ENCODE measurements at regions of chr5 and their contacts with region 1.

Region 1: DNA sequence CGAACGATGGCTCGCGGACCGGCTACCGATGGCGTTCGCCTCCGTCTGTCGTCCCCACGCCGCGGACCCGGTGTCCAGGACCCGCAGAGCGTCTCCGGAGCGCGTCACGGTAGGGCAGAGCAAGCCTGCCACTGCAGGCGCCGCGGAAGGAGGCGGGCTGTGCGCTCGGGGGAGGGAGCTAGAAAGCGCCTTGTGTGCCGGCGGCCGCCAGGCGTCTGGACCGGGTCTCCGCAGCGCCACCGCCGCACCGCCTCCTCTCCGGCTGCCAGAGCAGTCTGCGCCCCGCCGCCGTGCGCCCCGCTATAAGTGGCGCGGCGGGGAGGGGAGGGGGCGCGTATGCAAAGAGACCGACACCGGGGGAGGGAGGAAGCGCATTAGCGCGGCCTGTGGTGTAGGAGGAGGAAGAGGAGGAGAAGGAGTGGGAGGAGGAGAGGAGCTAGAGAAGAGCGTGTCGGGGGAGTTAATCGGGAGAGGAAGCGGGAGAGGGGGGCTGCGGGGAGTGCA is at the start of gene ENC1:
- DNase-seq: peak; percentile 89 to 96 (median 90)
- ATAC-seq: peak; percentile 76 to 94 (median 86)
- H3K4me3 ChIP-seq: peak within 1 kb of the TSS; percentile 69 to 91 (median 80)
- H3K27ac ChIP-seq: peak within 1 kb of the TSS; percentile 81 to 96 (median 92)
- H3K4me1 ChIP-seq: peaks cover 0 to 62% (median 31%) of the 10 kb centered on the region in 12 donors
- H3K27me3 ChIP-seq: no peaks in the 10 kb centered on the region
- CTCF ChIP-seq: peak; percentile 39 to 66 (median 54)
- POLR2A ChIP-seq: peak in 1 of 2 donors; percentile 71
- total RNA-seq, gene ENC1: 3.1 to 11.0 (median 5.5) TPM

Region 2: DNA sequence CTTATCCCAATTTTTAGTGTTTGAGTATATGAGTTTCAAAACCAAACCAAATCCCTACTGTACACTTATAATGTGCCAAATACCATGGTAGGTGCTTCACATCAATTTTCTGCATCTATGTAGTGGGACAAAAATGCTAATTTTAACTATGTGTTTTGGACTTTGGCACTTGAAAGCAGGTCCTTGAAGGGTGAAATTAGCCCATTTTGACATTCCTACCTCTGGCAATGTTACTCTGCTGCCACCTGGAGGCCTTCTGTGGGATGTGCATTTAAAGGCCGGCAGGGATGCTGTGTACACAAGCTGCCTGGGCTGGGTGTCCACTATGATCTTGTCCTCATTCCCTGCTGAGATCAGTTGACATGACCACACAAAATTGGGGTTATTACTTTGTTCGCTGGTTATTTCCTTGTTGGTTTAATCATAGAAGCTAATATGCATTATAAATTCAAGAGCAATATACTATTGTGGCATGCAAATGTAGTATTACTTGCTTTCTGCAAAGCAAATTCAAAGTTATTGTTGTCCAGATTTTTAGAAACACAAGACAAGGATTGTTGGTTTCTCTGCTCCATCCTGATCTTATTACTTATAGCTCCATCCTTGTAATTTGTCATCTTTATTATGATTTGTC is 847.7 kb before region 1 on chr5:
- intact Hi-C with region 1: loop called in 8 of 10 experiments (anchors 5 to 10 kb)
- DNase-seq: peak; percentile 48 to 71 (median 62)
- ATAC-seq: peak in 3 of 4 donors; percentile 78 to 89 (median 79)
- H3K4me3 ChIP-seq: no peak overlapping the region
- H3K27ac ChIP-seq: no peak overlapping the region
- H3K4me1 ChIP-seq: peaks cover 0 to 28% (median 11%) of the 10 kb centered on the region in 12 donors
- H3K27me3 ChIP-seq: no peaks in the 10 kb centered on the region
- CTCF ChIP-seq: peak; percentile 91 to 100 (median 97)
- POLR2A ChIP-seq: no peak

Region 3: GRCh38 chr5:74056789-74057164 is 583.7 kb before region 1 on chr5:
- intact Hi-C with region 1: loop called in 1 of 10 experiments (anchors 2 kb)
- DNase-seq: no peak
- ATAC-seq: peak in 3 of 4 donors; percentile 44 to 66 (median 49)
- H3K4me3 ChIP-seq: no peak overlapping the region
- H3K27ac ChIP-seq: peak overlapping the region in 4 of 12 donors; percentile 21 to 54 (median 44)
- H3K4me1 ChIP-seq: peaks cover 0 to 16% (median 0%) of the 10 kb centered on the region in 12 donors
- H3K27me3 ChIP-seq: no peaks in the 10 kb centered on the region
- CTCF ChIP-seq: peak in 10 of 12 donors; percentile 10 to 57 (median 35)
- POLR2A ChIP-seq: no peak

Region 4: DNA sequence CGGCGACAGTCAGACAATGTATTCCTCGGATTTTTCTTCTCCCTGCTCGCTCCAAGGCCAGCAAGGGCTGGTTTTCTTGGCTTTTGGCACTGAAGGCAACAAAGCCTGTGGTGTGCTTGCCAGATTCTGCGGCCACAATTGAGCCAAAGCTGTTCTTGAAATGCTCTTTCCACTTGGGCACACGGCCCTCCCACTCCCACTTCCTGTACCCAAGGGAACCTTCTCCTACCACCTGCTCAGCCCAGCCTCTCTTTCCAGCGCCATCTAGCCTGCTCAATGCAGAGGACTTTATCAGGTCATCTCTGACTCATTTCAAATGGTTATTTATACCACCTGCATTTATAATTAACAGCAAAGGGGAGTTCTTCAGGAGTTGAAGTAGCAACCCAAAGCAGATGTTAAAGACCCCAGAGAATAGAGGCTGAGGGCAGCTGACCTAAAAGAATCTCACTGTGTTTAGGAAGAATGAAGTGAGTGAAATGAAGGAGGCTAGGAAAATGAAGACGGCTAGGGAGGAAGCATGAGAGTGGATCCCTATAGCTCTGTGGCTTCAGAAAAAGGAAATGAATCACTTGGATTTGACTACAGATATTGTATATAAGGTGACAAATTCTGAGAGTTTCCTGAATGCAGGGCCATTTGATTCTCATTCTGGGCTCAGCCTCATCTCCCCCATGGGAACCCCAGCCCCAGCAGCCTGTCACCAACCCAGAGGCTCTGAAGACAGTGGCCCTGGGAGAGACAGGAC is 439.0 kb before region 1 on chr5:
- intact Hi-C with region 1: loop called in 4 of 10 experiments (anchors 5 to 10 kb)
- DNase-seq: peak; percentile 42 to 75 (median 58)
- ATAC-seq: peak; percentile 47 to 82 (median 74)
- H3K4me3 ChIP-seq: no peak overlapping the region
- H3K27ac ChIP-seq: peak overlapping the region in 3 of 12 donors; percentile 6 to 13 (median 8)
- H3K4me1 ChIP-seq: peaks cover 0 to 39% (median 21%) of the 10 kb centered on the region in 12 donors
- H3K27me3 ChIP-seq: no peaks in the 10 kb centered on the region
- CTCF ChIP-seq: no peak
- POLR2A ChIP-seq: no peak

Region 5: DNA sequence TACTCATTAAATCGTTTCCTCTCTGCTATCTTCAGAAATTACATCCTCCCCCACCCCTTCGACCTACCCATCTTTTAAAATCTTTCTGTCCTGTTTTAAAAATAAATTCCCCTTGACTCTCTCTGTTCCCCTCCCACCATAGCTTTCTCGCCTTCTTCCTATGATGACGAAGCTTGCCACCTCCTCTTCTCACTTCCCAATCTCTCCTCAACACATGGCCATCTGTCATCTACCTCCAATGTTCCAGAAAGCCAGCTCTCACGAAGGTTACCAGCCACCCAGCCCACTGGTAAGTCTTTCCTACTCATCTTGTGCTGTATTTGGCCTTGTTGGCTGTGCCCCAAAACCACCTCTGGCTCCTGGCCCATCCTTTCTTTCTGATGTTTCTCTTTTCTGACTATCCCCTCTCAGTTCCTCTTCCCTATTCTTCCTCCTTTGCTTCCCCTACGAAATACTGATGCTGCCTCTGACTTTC is 346.2 kb before region 1 on chr5:
- intact Hi-C with region 1: loop called in 4 of 10 experiments (anchors 5 to 10 kb)
- DNase-seq: peak in 1 of 5 donors; percentile 62
- ATAC-seq: no peak
- H3K4me3 ChIP-seq: no peak overlapping the region
- H3K27ac ChIP-seq: no peak overlapping the region
- H3K4me1 ChIP-seq: peaks cover 0 to 23% (median 2%) of the 10 kb centered on the region in 12 donors
- H3K27me3 ChIP-seq: no peaks in the 10 kb centered on the region
- CTCF ChIP-seq: no peak
- POLR2A ChIP-seq: no peak

Region 6: DNA sequence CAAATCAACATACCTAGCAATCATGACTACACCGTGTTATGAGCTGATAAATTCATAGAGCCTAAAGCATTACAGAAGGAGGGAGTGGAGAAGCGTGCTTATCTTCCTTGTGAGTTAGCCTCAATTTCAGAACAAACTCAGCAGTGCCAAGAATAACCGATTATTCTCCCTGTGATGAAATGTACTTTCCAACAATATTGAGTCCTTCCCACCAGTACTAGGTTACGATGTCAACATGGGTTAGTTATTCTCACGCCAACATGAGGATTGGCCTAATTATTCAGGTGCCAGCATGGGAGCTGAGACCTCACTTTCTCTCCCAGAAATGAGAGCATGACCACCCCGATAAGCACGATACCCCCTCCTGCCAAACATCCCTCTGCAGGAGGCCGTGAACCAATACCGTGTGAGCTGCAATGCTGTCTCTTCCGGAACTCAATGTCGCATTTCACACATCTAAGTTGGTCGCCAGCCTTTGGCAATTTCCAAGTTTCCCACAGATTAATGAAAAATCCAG is 193.7 kb before region 1 on chr5:
- intact Hi-C with region 1: loop called in 1 of 10 experiments (anchors 5 kb)
- DNase-seq: peak in 4 of 5 donors; percentile 44 to 54 (median 50)
- ATAC-seq: peak; percentile 78 to 91 (median 84)
- H3K4me3 ChIP-seq: peak overlapping the region in 1 of 12 donors; percentile 8
- H3K27ac ChIP-seq: peak overlapping the region in 11 of 12 donors; percentile 6 to 70 (median 52)
- H3K4me1 ChIP-seq: peaks cover 0 to 18% (median 9%) of the 10 kb centered on the region in 12 donors
- H3K27me3 ChIP-seq: no peaks in the 10 kb centered on the region
- CTCF ChIP-seq: no peak
- POLR2A ChIP-seq: no peak

Region 7: GRCh38 chr5:74516211-74516636 is 124.3 kb before region 1 on chr5:
- intact Hi-C with region 1: no loop called
- DNase-seq: peak in 4 of 5 donors; percentile 30 to 43 (median 34)
- ATAC-seq: peak in 2 of 4 donors; percentile 59 to 65
- H3K4me3 ChIP-seq: no peak overlapping the region
- H3K27ac ChIP-seq: no peak overlapping the region
- H3K4me1 ChIP-seq: peaks cover 0 to 11% (median 0%) of the 10 kb centered on the region in 12 donors
- H3K27me3 ChIP-seq: no peaks in the 10 kb centered on the region
- CTCF ChIP-seq: no peak
- POLR2A ChIP-seq: no peak

Region 8: DNA sequence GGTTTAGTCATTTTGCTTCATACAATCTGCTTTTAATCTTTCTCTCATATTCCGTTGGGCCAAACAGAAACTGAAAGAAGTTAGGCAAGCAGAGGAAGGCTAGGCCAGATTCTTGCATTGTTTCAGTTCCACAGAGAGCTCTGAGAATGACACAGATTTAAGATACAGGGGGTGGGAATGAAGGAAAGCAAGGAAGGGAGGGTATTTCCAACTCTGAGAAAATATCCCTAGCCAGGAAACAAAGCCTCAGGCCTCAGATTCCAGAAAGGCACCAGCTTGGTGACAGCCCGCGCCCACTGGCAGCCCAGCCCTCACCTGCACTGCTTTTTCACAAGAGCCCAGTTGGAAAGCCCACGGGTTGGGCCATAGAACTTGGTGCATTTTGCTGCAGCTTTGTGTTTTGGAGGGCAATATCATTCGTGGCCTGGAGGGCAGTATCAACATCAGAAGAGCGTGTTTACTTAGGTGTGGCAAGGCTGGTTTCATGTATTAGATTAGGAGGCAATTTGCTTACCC is 63.5 kb before region 1 on chr5:
- intact Hi-C with region 1: loop called in 1 of 10 experiments (anchors 2 kb)
- DNase-seq: peak in 2 of 5 donors; percentile 17 to 26
- ATAC-seq: peak in 3 of 4 donors; percentile 66 to 94 (median 83)
- H3K4me3 ChIP-seq: peak overlapping the region in 7 of 12 donors; percentile 1 to 40 (median 29)
- H3K27ac ChIP-seq: peak overlapping the region; percentile 36 to 87 (median 70)
- H3K4me1 ChIP-seq: peaks cover 0 to 39% (median 16%) of the 10 kb centered on the region in 12 donors
- H3K27me3 ChIP-seq: no peaks in the 10 kb centered on the region
- CTCF ChIP-seq: no peak
- POLR2A ChIP-seq: no peak

Region 9: GRCh38 chr5:74934949-74935751 is 294.6 kb after region 1 on chr5:
- intact Hi-C with region 1: no loop called
- DNase-seq: no peak
- ATAC-seq: peak in 2 of 4 donors; percentile 12 to 24
- H3K4me3 ChIP-seq: no peak overlapping the region
- H3K27ac ChIP-seq: peak overlapping the region in 1 of 12 donors; percentile 15
- H3K4me1 ChIP-seq: peaks cover 0 to 12% (median 0%) of the 10 kb centered on the region in 12 donors
- H3K27me3 ChIP-seq: peaks cover 0 to 45% (median 10%) of the 10 kb centered on the region in 9 donors
- CTCF ChIP-seq: peak in 5 of 12 donors; percentile 8 to 30 (median 22)
- POLR2A ChIP-seq: no peak